B cell (primary cell): ENCODE measurements at regions of chr3 and their contacts with region 1.

Region 1: GRCh38 chr3:40584625-40585189 is 59.9 kb downstream of the ZNF621 start:
- DNase-seq: peak; percentile 85
- ATAC-seq: peak; percentile 89
- H3K4me3 ChIP-seq: no peak overlapping the region
- H3K4me3 Mint-ChIP-seq: no peak overlapping the region
- H3K27ac ChIP-seq: no peak overlapping the region
- H3K27ac Mint-ChIP-seq: no peak overlapping the region
- H3K4me1 ChIP-seq: peaks cover 0 to 3% of the 10 kb centered on the region in 2 donors
- H3K4me1 Mint-ChIP-seq: peaks cover 14% of the 10 kb centered on the region
- H3K27me3 ChIP-seq: no peaks in the 10 kb centered on the region
- H3K27me3 Mint-ChIP-seq: peaks cover 7% of the 10 kb centered on the region
- CTCF ChIP-seq: peak; percentile 94

Region 2: DNA sequence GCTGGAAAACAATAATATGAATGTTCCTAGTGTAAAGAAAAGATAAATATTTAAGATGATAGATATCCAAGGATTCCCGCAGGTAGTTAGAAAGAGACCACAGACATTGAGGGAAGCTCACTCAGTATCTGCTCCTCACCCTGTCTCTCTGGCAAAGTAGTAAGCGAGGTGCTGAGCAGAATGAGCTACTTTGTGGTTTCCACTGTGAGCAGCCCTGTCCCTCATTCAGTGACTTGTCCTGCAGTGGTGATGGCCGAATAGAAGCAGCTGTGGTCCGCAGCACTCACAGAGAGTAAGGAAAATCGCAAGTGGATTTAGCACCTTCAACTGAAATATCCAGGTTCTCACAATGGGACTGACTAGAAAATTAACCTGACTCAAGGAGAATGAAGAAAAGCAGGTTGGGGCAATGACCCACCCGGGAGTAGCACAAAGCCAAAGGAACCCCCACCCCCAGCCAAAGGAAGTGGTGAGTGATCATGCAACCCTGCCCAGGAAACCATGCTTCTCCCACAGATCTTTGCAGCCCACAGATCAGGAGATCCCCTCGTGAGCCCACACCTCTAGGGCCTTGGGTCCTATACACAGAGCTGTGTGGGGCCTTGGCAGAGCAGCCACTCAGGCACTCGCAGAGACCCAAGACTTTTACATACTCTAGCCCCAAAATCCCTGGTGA is 1223.3 kb before region 1 on chr3:
- CTCF ChIA-PET with region 1: no interaction called
- POLR2A ChIA-PET with region 1: no interaction called
- intact Hi-C with region 1: no loop called
- DNase-seq: no peak
- ATAC-seq: no peak
- H3K4me3 ChIP-seq: no peak overlapping the region
- H3K4me3 Mint-ChIP-seq: no peak overlapping the region
- H3K27ac ChIP-seq: no peak overlapping the region
- H3K27ac Mint-ChIP-seq: no peak overlapping the region
- H3K4me1 ChIP-seq: peaks cover 3 to 4% of the 10 kb centered on the region in 2 donors
- H3K4me1 Mint-ChIP-seq: peaks cover 6% of the 10 kb centered on the region
- H3K27me3 ChIP-seq: no peaks in the 10 kb centered on the region
- H3K27me3 Mint-ChIP-seq: no peaks in the 10 kb centered on the region
- CTCF ChIP-seq: no peak

Region 3: DNA sequence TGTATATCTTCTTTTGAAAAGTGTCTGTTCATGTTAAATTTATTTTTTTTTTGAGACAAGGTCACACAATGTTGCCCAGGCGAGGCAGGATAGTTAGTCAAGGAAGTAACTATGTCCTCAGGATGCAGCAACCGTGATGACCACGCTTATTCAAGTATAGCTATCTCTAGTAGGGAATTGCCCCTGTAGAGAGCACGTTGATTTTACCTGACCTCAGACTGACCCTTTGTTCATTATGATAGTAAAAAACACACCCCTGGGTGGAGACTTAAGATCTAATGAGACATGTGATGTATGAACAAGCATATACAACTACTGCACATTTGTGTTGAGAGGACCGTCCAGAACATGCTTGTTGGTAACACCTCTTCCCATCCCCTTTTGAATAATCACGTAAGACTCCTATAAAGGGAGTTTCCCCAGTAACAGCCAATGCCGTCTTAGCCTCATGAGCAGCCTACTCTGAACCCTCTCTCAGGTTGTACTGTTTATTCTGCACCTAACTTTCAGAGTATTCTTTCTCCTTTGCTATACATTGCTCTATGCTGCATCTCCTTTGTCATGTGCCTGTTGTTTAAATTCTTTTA is 27.0 kb before region 1 on chr3:
- CTCF ChIA-PET with region 1: no interaction called
- POLR2A ChIA-PET with region 1: no interaction called
- intact Hi-C with region 1: no loop called
- DNase-seq: no peak
- ATAC-seq: no peak
- H3K4me3 ChIP-seq: no peak overlapping the region
- H3K4me3 Mint-ChIP-seq: no peak overlapping the region
- H3K27ac ChIP-seq: no peak overlapping the region
- H3K27ac Mint-ChIP-seq: no peak overlapping the region
- H3K4me1 ChIP-seq: no peaks in the 10 kb centered on the region
- H3K4me1 Mint-ChIP-seq: no peaks in the 10 kb centered on the region
- H3K27me3 ChIP-seq: no peaks in the 10 kb centered on the region
- H3K27me3 Mint-ChIP-seq: peaks cover 2% of the 10 kb centered on the region
- CTCF ChIP-seq: no peak

Region 4: GRCh38 chr3:40672861-40673260 is 88.2 kb after region 1 on chr3:
- CTCF ChIA-PET with region 1: interaction called, 6 read pairs
- POLR2A ChIA-PET with region 1: no interaction called
- intact Hi-C with region 1: loop called (anchors 1 kb)
- DNase-seq: no peak
- ATAC-seq: no peak
- H3K4me3 ChIP-seq: no peak overlapping the region
- H3K4me3 Mint-ChIP-seq: no peak overlapping the region
- H3K27ac ChIP-seq: no peak overlapping the region
- H3K27ac Mint-ChIP-seq: no peak overlapping the region
- H3K4me1 ChIP-seq: peaks cover 2 to 9% of the 10 kb centered on the region in 2 donors
- H3K4me1 Mint-ChIP-seq: peaks cover 14% of the 10 kb centered on the region
- H3K27me3 ChIP-seq: no peaks in the 10 kb centered on the region
- H3K27me3 Mint-ChIP-seq: no peaks in the 10 kb centered on the region
- CTCF ChIP-seq: no peak

Region 5: GRCh38 chr3:40719660-40720287 is 135.1 kb after region 1 on chr3:
- CTCF ChIA-PET with region 1: interaction called, 12 read pairs
- POLR2A ChIA-PET with region 1: no interaction called
- intact Hi-C with region 1: loop called (anchors 10 kb)
- DNase-seq: no peak
- ATAC-seq: no peak
- H3K4me3 ChIP-seq: no peak overlapping the region
- H3K4me3 Mint-ChIP-seq: no peak overlapping the region
- H3K27ac ChIP-seq: no peak overlapping the region
- H3K27ac Mint-ChIP-seq: no peak overlapping the region
- H3K4me1 ChIP-seq: peaks cover 24% of the 10 kb centered on the region in 2 donors
- H3K4me1 Mint-ChIP-seq: peaks cover 37% of the 10 kb centered on the region
- H3K27me3 ChIP-seq: no peaks in the 10 kb centered on the region
- H3K27me3 Mint-ChIP-seq: no peaks in the 10 kb centered on the region
- CTCF ChIP-seq: no peak

Region 6: GRCh38 chr3:40971191-40972168 is 386.8 kb after region 1 on chr3:
- CTCF ChIA-PET with region 1: interaction called, 48 read pairs
- POLR2A ChIA-PET with region 1: no interaction called
- intact Hi-C with region 1: loop called (anchors 1 kb)
- DNase-seq: peak; percentile 75
- ATAC-seq: peak; percentile 80
- H3K4me3 ChIP-seq: peak overlapping the region in 4 of 5 experiments; percentile 9 to 41 (median 22)
- H3K4me3 Mint-ChIP-seq: peak overlapping the region; percentile 69
- H3K27ac ChIP-seq: peak overlapping the region; percentile 92 to 99
- H3K27ac Mint-ChIP-seq: peak overlapping the region; percentile 88
- H3K4me1 ChIP-seq: peaks cover 51 to 56% of the 10 kb centered on the region in 2 donors
- H3K4me1 Mint-ChIP-seq: peaks cover 66% of the 10 kb centered on the region
- H3K27me3 ChIP-seq: no peaks in the 10 kb centered on the region
- H3K27me3 Mint-ChIP-seq: no peaks in the 10 kb centered on the region
- CTCF ChIP-seq: no peak

Region 7: DNA sequence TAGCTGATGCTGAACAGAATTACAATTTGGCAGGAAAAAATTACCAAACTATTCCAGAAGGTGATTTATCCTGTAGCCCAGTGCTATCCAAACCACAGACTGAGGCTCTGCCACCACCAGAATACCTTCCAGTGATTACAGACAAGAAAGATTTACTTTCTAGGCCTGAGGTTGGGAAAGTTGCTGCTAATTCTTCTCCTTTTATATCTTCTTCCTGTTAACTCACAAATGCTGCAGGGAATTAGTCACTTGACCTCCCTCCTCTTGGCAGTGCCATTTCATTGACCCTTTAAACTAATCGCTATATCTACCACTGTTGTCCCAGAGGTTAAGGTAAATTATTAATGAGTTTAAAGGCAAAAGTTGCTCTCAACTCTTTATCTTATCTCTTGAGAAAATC is 733.0 kb after region 1 on chr3:
- CTCF ChIA-PET with region 1: no interaction called
- POLR2A ChIA-PET with region 1: no interaction called
- intact Hi-C with region 1: loop called (anchors 10 kb)
- DNase-seq: no peak
- ATAC-seq: no peak
- H3K4me3 ChIP-seq: no peak overlapping the region
- H3K4me3 Mint-ChIP-seq: no peak overlapping the region
- H3K27ac ChIP-seq: no peak overlapping the region
- H3K27ac Mint-ChIP-seq: no peak overlapping the region
- H3K4me1 ChIP-seq: no peaks in the 10 kb centered on the region
- H3K4me1 Mint-ChIP-seq: no peaks in the 10 kb centered on the region
- H3K27me3 ChIP-seq: no peaks in the 10 kb centered on the region
- H3K27me3 Mint-ChIP-seq: no peaks in the 10 kb centered on the region
- CTCF ChIP-seq: no peak

Region 8: DNA sequence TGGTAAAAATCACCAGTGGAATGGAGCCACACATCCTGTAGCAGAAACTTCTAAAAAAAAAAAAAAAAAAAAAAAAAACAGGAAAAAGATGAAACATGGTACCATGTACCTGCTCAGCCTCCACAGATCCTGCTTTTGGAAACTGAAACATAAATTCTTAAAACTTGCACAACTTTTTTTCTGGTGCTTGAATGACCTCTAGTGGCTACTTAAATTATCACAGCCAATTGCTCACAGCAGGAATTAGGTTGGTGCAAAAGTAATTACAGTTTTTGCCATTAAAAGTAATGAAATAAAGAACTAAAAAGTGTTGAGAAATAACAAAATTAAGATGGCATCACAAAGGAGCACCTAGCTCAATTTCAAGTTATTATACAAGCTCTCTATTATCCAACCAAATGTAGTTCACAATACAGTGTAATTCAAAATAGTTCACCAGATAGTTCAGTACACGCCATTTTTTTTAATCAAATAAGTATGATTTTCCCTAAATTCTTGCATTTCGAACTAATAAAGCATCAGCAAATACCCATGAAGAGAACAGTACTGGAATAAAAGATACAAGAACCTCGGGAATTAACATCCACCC is 1296.6 kb after region 1 on chr3:
- CTCF ChIA-PET with region 1: interaction called, 280 read pairs
- POLR2A ChIA-PET with region 1: no interaction called
- intact Hi-C with region 1: loop called (anchors 1 kb)
- DNase-seq: peak; percentile 67
- ATAC-seq: no peak
- H3K4me3 ChIP-seq: no peak overlapping the region
- H3K4me3 Mint-ChIP-seq: no peak overlapping the region
- H3K27ac ChIP-seq: no peak overlapping the region
- H3K27ac Mint-ChIP-seq: no peak overlapping the region
- H3K4me1 ChIP-seq: no peaks in the 10 kb centered on the region
- H3K4me1 Mint-ChIP-seq: no peaks in the 10 kb centered on the region
- H3K27me3 ChIP-seq: no peaks in the 10 kb centered on the region
- H3K27me3 Mint-ChIP-seq: no peaks in the 10 kb centered on the region
- CTCF ChIP-seq: peak; percentile 82